ENCODE measurements at regions of chr7 and their contacts with region 1.

Region 1: GRCh38 chr7:107890962-107891635 is at the start of gene DLD:
- DNase-seq: peak; percentile 98
- H3K4me3 ChIP-seq: peak within 1 kb of the TSS; percentile 73 to 93 (median 78)
- H3K27ac ChIP-seq: peak within 1 kb of the TSS; percentile 90 to 98 (median 95)
- H3K4me1 ChIP-seq: peaks cover 0 to 52% (median 41%) of the 10 kb centered on the region in 4 donors
- H3K27me3 ChIP-seq: no peaks in the 10 kb centered on the region
- CTCF ChIP-seq: no peak
- EP300 ChIP-seq: peak in 2 of 4 donors; percentile 34 to 63
- POLR2A ChIP-seq: peak; percentile 96
- total RNA-seq, gene DLD: 97.2 to 446 (median 124) TPM

Region 2: DNA sequence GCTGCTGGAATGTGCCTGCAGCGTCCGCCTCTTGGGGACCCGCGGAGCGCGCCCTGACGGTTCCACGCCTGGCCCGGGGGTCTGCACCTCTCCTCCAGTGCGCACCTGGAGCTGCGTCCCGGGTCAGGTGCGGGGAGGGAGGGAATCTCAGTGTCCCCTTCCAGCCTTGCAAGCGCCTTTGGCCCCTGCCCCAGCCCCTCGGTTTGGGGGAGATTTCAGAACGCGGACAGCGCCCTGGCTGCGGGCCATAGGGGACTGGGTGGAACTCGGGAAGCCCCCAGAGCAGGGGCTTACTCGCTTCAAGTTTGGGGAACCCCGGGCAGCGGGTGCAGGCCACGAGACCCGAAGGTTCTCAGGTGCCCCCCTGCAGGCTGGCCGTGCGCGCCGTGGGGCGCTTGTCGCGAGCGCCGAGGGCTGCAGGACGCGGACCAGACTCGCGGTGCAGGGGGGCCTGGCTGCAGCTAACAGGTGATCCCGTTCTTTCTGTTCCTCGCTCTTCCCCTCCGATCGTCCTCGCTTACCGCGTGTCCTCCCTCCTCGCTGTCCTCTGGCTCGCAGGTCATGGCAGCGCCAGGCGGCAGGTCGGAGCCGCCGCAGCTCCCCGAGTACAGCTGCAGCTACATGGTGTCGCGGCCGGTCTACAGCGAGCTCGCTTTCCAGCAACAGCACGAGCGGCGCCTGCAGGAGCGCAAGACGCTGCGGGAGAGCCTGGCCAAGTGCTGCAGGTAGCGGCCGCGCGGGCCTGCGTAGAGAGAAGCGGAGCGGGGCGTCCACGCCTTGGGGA is 229.8 kb before region 1 on chr7:
- intact Hi-C with region 1: no loop called
- DNase-seq: peak; percentile 68
- H3K4me3 ChIP-seq: peak overlapping the region; percentile 1 to 51 (median 45)
- H3K27ac ChIP-seq: no peak overlapping the region
- H3K4me1 ChIP-seq: peaks cover 0 to 19% (median 18%) of the 10 kb centered on the region in 4 donors
- H3K27me3 ChIP-seq: peaks cover 19 to 43% (median 27%) of the 10 kb centered on the region in 3 donors
- CTCF ChIP-seq: no peak
- EP300 ChIP-seq: no peak
- POLR2A ChIP-seq: no peak

Region 3: DNA sequence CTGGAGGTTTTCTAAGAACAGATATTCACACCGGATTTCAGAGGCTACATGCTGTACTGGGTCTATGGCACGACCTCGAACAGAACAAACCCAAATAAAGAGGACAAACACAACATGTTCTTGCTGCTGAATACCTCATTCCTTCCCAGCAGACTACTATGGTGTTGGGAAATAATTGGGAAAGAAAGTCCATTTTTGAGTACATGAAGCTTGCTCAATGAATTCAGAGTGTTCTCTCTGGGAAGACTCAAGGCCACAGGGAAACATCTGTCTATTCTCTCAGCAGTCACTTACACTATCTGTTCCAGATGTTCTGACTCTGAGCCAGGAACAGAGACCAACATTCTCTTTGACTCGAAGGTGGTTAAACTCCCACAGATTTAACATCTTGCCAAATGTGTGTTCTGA is 81.0 kb after region 1 on chr7:
- intact Hi-C with region 1: loop called (anchors 5 kb)
- DNase-seq: no peak
- H3K4me3 ChIP-seq: no peak overlapping the region
- H3K27ac ChIP-seq: peak overlapping the region; percentile 62 to 79 (median 69)
- H3K4me1 ChIP-seq: peaks cover 0 to 38% (median 27%) of the 10 kb centered on the region in 4 donors
- H3K27me3 ChIP-seq: no peaks in the 10 kb centered on the region
- CTCF ChIP-seq: no peak
- EP300 ChIP-seq: peak; percentile 73 to 97 (median 91)
- POLR2A ChIP-seq: no peak

Region 4: DNA sequence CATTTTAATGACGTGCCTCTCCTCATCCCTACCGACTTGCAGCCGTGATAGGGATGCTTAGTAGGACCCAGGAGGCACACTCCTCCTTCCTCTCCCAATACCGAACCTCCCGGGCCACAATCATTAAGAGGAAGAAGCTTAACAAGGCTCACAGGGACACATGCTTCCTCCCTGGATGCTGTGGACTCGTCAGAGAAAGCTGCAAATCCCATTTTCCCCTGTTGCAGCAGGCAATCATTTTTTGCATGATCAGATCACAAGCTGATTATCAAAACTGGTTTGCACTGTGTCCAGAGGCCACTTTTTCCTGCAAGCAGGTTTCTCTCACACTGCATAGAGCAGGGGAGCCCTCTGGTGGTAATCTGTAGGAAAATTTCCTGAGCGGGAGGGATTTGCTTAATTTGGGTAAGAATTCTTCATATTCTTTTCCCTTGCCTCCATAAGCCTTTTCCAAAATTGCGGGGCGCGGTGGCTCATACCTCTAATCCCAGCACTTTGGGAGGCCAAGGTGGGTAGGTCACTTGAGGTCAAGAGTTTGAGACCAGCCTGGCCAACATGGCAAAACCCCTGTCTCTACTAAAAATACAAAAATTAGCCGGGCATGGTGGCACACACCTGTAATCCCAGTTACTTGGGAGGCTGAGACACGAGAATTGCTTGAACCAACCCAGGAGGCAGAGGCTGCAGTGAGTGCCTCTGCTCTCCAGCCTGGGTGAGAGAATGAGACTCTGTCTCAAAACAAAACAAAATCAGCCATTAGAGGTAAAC is 255.2 kb after region 1 on chr7:
- intact Hi-C with region 1: loop called (anchors 5 kb)
- DNase-seq: peak; percentile 78
- H3K4me3 ChIP-seq: peak overlapping the region in 3 of 4 donors; percentile 13 to 31 (median 28)
- H3K27ac ChIP-seq: peak overlapping the region in 2 of 4 donors; percentile 16 to 41
- H3K4me1 ChIP-seq: peaks cover 0 to 26% (median 16%) of the 10 kb centered on the region in 4 donors
- H3K27me3 ChIP-seq: no peaks in the 10 kb centered on the region
- CTCF ChIP-seq: peak; percentile 80 to 93 (median 88)
- EP300 ChIP-seq: no peak
- POLR2A ChIP-seq: no peak

Region 5: DNA sequence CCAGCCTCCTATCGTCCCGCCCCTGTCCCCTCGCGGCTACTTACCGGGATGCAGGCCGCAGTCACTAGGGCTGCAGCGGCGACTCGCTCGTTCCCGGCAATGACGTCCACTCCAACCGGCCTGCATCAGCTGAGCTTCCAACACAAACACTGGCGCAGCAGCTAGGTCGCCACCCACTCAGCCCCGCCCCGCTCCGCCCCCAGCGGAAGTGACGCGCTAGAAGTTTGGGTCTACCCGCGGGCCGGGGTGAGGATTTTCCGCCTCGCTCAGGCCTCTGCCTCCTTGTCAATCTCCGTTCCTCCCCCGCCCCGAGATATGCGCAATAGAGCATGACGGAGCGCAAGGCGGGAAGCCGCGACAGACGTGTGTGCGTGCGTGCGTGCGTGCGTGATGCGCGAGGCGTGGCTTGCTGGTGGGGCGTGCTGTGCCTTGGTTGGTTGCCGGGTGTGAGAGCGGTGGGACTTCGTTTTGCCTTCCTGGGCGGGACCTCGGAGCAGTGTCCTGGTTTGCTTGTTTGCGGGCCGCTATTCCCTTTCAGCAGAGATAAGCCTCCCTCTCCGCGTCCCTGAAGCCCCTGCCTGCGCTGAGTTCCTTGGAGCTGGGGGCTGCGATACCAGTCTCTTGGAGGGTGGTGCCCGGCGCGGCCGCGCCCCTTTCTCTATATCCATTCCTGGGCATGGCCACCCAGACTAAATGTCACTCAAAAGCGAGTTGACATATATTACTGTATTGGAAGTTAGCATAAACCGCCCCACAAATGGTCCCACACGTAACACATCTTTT is 635.1 kb after region 1 on chr7 and contains the start of gene PNPLA8:
- intact Hi-C with region 1: loop called (anchors 10 kb)
- DNase-seq: peak; percentile 100
- H3K4me3 ChIP-seq: peak within 1 kb of the TSS; percentile 69 to 78 (median 76)
- H3K27ac ChIP-seq: peak within 1 kb of the TSS; percentile 95 to 99 (median 96)
- H3K4me1 ChIP-seq: peaks cover 0 to 32% (median 27%) of the 10 kb centered on the region in 4 donors
- H3K27me3 ChIP-seq: no peaks in the 10 kb centered on the region
- CTCF ChIP-seq: no peak
- EP300 ChIP-seq: peak in 3 of 4 donors; percentile 28 to 97 (median 78)
- POLR2A ChIP-seq: peak; percentile 84 to 87
- total RNA-seq, gene PNPLA8: 26.3 to 42.9 (median 35.5) TPM

Measured in sigmoid colon (tissue), 7 donors.